Naive thymus-derived CD4-positive, alpha-beta T cell (primary cell): ENCODE measurements at regions of chr1 and their contacts with region 1.

Region 1: DNA sequence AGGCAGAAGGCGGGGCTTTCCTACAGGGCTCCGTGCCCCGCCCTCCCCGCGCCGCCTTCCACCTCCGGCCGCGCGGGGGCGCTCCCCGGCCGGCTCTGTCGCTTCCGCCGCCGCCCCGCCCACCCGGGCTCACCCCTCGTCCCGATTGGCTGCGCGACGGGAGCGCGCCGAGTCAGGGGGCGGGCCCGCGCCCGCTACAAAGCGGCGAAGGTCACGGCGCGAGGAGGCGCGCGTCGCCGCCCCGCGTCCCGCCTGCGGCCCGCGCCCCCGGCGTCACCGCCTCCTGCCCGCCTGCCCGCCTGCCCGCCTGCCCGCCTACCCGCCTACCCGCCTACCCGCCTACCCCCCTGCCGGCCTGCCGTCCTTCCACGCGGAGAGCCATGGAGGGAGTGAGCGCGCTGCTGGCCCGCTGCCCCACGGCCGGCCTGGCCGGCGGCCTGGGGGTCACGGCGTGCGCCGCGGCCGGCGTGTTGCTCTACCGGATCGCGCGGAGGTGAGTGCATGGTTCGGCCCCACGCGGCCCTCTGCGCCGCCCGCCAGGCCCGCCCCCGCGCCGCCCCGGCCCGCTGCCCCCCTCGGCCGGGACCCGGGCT is at the start of gene TMEM201:
- DNase-seq: peak; percentile 88 to 98 (median 93)
- ATAC-seq: peak; percentile 98
- H3K4me3 ChIP-seq: peak within 1 kb of the TSS; percentile 51
- H3K4me3 Mint-ChIP-seq: peak within 1 kb of the TSS; percentile 78 to 93 (median 86)
- H3K27ac ChIP-seq: peak within 1 kb of the TSS; percentile 69
- H3K27ac Mint-ChIP-seq: peak within 1 kb of the TSS; percentile 43 to 93 (median 65)
- H3K4me1 ChIP-seq: peaks cover 11 to 22% of the 10 kb centered on the region in 2 donors
- H3K4me1 Mint-ChIP-seq: peaks cover 20 to 37% (median 32%) of the 10 kb centered on the region in 7 donors
- H3K27me3 ChIP-seq: no peaks in the 10 kb centered on the region
- H3K27me3 Mint-ChIP-seq: no peaks in the 10 kb centered on the region
- total RNA-seq, gene TMEM201: 9.0 to 18.5 (median 10.0) TPM

Region 2: GRCh38 chr1:9128520-9129265 is 460.0 kb before region 1 on chr1 and contains the start of gene GPR157:
- CTCF ChIA-PET with region 1: no interaction called
- POLR2A ChIA-PET with region 1: interaction called, 3 read pairs
- intact Hi-C with region 1: loop called in 1 of 2 experiments (anchors 2 kb)
- DNase-seq: peak; percentile 53 to 82 (median 70)
- ATAC-seq: peak; percentile 95
- H3K4me3 ChIP-seq: peak within 1 kb of the TSS; percentile 67
- H3K4me3 Mint-ChIP-seq: peak within 1 kb of the TSS; percentile 85 to 95 (median 90)
- H3K27ac ChIP-seq: peak within 1 kb of the TSS; percentile 67
- H3K27ac Mint-ChIP-seq: peak within 1 kb of the TSS; percentile 59 to 94 (median 87)
- H3K4me1 ChIP-seq: peaks cover 8 to 24% of the 10 kb centered on the region in 2 donors
- H3K4me1 Mint-ChIP-seq: peaks cover 19 to 40% (median 32%) of the 10 kb centered on the region in 7 donors
- H3K27me3 ChIP-seq: no peaks in the 10 kb centered on the region
- H3K27me3 Mint-ChIP-seq: peaks cover 0 to 25% (median 0%) of the 10 kb centered on the region in 5 donors
- total RNA-seq, gene GPR157: 4.0 to 14.1 (median 5.9) TPM

Region 3: GRCh38 chr1:9428601-9429341 is 159.9 kb before region 1 on chr1:
- CTCF ChIA-PET with region 1: no interaction called
- POLR2A ChIA-PET with region 1: no interaction called
- intact Hi-C with region 1: loop called (anchors 1 to 5 kb)
- DNase-seq: peak; percentile 96 to 100 (median 99)
- ATAC-seq: peak; percentile 90
- H3K4me3 ChIP-seq: peak overlapping the region; percentile 80
- H3K4me3 Mint-ChIP-seq: peak overlapping the region; percentile 80 to 100 (median 96)
- H3K27ac ChIP-seq: peak overlapping the region; percentile 88
- H3K27ac Mint-ChIP-seq: peak overlapping the region; percentile 92 to 100 (median 98)
- H3K4me1 ChIP-seq: peaks cover 28 to 42% of the 10 kb centered on the region in 2 donors
- H3K4me1 Mint-ChIP-seq: peaks cover 34 to 64% (median 56%) of the 10 kb centered on the region in 7 donors
- H3K27me3 ChIP-seq: no peaks in the 10 kb centered on the region
- H3K27me3 Mint-ChIP-seq: peaks cover 0 to 21% (median 0%) of the 10 kb centered on the region in 5 donors

Region 4: GRCh38 chr1:9615316-9616063 is 26.8 kb after region 1 on chr1:
- CTCF ChIA-PET with region 1: interaction called, 4 read pairs
- POLR2A ChIA-PET with region 1: no interaction called
- intact Hi-C with region 1: loop called in 1 of 2 experiments (anchors 2 kb)
- DNase-seq: peak in 8 of 9 donors; percentile 40 to 63 (median 55)
- ATAC-seq: peak; percentile 89
- H3K4me3 ChIP-seq: no peak overlapping the region
- H3K4me3 Mint-ChIP-seq: no peak overlapping the region
- H3K27ac ChIP-seq: no peak overlapping the region
- H3K27ac Mint-ChIP-seq: no peak overlapping the region
- H3K4me1 ChIP-seq: no peaks in the 10 kb centered on the region
- H3K4me1 Mint-ChIP-seq: peaks cover 0 to 5% (median 0%) of the 10 kb centered on the region in 7 donors
- H3K27me3 ChIP-seq: no peaks in the 10 kb centered on the region
- H3K27me3 Mint-ChIP-seq: peaks cover 0 to 8% (median 0%) of the 10 kb centered on the region in 5 donors

Region 5: GRCh38 chr1:9689011-9689706 is 100.5 kb after region 1 on chr1:
- CTCF ChIA-PET with region 1: no interaction called
- POLR2A ChIA-PET with region 1: no interaction called
- intact Hi-C with region 1: loop called in 1 of 2 experiments (anchors 2 kb)
- DNase-seq: peak; percentile 62 to 89 (median 82)
- ATAC-seq: peak; percentile 93
- H3K4me3 ChIP-seq: peak overlapping the region; percentile 50
- H3K4me3 Mint-ChIP-seq: peak overlapping the region; percentile 80 to 90 (median 87)
- H3K27ac ChIP-seq: peak overlapping the region; percentile 70
- H3K27ac Mint-ChIP-seq: peak overlapping the region in 8 of 9 donors; percentile 59 to 90 (median 78)
- H3K4me1 ChIP-seq: peaks cover 53 to 59% of the 10 kb centered on the region in 2 donors
- H3K4me1 Mint-ChIP-seq: peaks cover 36 to 85% (median 73%) of the 10 kb centered on the region in 7 donors
- H3K27me3 ChIP-seq: no peaks in the 10 kb centered on the region
- H3K27me3 Mint-ChIP-seq: no peaks in the 10 kb centered on the region

Region 6: DNA sequence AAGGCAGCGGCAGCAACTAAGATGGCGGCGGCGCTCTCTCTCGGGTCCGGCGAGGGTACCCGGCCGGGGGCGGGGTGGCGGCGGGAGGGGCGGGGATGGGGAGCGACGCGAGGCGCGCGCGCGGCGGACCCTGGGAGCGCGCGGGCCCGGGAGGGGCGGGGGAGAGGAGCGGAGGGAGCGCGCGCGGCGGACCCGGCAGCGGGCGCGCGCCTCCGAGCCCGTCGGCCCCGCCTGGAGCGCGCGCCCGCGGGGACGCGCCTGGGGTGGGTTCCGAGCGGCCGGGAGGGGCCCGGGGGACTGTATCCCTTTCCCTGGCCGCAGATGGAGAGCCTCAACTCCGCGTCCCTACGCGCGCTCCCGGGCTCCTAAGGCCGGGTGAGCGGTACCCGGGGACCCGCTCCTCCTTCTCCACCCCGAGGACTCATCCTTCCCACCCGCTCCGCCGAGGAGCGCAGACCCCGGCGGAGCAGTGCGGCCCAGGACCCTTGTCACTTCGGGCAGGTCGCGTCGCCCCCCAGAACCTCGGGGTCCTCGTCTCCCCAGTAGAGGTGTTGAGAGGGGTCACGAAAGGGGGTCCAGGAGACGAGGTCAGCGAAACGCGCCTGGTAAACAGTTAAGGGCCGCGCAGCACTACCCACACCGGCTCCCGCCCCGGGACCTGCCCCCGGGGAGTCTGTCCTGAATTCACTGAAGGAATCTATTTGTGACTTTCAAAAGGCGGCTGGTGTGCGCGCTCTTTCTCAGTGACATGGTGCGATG is 235.5 kb after region 1 on chr1 and contains the start of gene CLSTN1:
- CTCF ChIA-PET with region 1: no interaction called
- POLR2A ChIA-PET with region 1: no interaction called
- intact Hi-C with region 1: loop called in 1 of 2 experiments (anchors 1 kb)
- DNase-seq: peak; percentile 73 to 88 (median 84)
- ATAC-seq: peak; percentile 86
- H3K4me3 ChIP-seq: peak within 1 kb of the TSS; percentile 82
- H3K4me3 Mint-ChIP-seq: peak within 1 kb of the TSS; percentile 95 to 99 (median 98)
- H3K27ac ChIP-seq: peak within 1 kb of the TSS; percentile 68
- H3K27ac Mint-ChIP-seq: peak within 1 kb of the TSS; percentile 80 to 97 (median 93)
- H3K4me1 ChIP-seq: peaks cover 24 to 34% of the 10 kb centered on the region in 2 donors
- H3K4me1 Mint-ChIP-seq: peaks cover 31 to 52% (median 46%) of the 10 kb centered on the region in 7 donors
- H3K27me3 ChIP-seq: no peaks in the 10 kb centered on the region
- H3K27me3 Mint-ChIP-seq: peaks cover 0 to 3% (median 0%) of the 10 kb centered on the region in 5 donors
- total RNA-seq, gene CLSTN1: 68.6 to 116 (median 85.6) TPM

Region 7: GRCh38 chr1:10032590-10033358 is 444.1 kb after region 1 on chr1 and contains the start of gene UBE4B:
- CTCF ChIA-PET with region 1: no interaction called
- POLR2A ChIA-PET with region 1: no interaction called
- intact Hi-C with region 1: loop called (anchors 1 to 5 kb)
- DNase-seq: peak; percentile 98 to 100 (median 99)
- ATAC-seq: peak; percentile 97
- H3K4me3 ChIP-seq: peak within 1 kb of the TSS; percentile 96
- H3K4me3 Mint-ChIP-seq: peak within 1 kb of the TSS; percentile 79 to 98 (median 96)
- H3K27ac ChIP-seq: peak within 1 kb of the TSS; percentile 94
- H3K27ac Mint-ChIP-seq: peak within 1 kb of the TSS; percentile 91 to 98 (median 97)
- H3K4me1 ChIP-seq: peaks cover 14 to 15% of the 10 kb centered on the region in 2 donors
- H3K4me1 Mint-ChIP-seq: peaks cover 20 to 34% (median 28%) of the 10 kb centered on the region in 7 donors
- H3K27me3 ChIP-seq: no peaks in the 10 kb centered on the region
- H3K27me3 Mint-ChIP-seq: no peaks in the 10 kb centered on the region
- total RNA-seq, gene UBE4B: 37.9 to 48.3 (median 39.3) TPM